KBM-7 (cell line): ENCODE measurements at regions of chr20 and their contacts with region 1.

Region 1: GRCh38 chr20:44080646-44081267 is 106.2 kb downstream of the JPH2 start:
- DNase-seq: peak; percentile 70

Region 2: GRCh38 chr20:43537921-43538877 is 542.6 kb before region 1 on chr20:
- in situ Hi-C with region 1: loop called (anchors 25 kb)
- DNase-seq: peak; percentile 37

Region 3: DNA sequence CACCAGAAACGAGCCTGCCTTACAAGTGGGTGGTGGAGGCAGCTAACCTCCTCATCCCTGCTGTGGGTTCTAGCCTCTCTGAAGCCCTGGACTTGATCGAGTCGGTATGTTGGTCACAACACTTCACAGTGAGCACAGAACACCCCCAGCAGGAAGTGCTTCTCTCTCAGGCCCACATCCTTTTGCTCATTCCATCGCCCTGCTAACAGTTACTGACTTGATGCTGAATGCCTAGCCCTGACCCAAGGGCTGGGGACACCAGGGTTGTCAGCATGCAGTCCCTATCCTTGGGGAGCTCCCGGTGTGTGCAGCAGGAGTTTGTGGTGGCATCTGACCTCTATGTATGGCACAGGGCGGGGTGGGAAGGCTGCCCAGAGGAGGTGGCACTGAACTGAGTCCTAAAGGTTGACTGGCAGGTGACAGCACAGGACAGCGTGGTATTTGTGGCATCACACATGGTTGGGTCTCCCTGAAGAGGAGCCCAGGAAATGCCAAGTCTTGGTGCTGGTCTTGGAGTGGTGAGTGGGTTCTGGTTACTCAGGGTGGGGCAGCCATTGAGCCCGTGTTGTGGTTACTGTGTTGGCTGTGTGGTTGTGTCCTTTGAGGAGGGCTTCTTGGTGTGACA is 380.7 kb before region 1 on chr20:
- in situ Hi-C with region 1: no loop called
- DNase-seq: no peak

Region 4: DNA sequence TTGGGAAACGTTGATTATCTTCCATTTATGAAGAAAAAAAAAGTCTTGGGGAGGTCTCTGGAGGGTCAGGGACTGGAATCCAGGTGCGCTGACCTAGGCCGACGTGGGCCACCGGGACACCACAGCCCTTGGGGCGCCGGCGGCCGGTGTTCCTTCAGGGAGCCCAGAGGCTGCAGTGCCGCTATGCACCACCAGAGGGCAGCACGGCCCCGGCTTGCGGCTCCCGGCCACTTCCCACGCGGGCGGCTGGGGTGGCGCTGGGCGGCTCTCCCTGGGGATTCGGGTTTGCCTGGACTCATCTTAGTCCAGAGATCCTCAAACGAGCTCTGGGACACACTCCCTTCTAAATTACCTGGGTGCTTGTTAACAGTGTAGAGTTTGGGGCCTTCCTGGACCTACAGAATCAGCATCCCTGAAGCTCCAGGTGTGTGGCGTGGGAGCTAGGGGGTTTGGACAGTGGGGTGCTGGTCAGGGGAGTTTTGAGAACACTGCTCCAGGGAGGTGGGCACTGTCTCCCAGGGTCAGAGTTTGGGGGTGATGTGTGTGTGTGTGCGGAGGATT is 330.9 kb before region 1 on chr20:
- in situ Hi-C with region 1: loop called (anchors 10 kb)
- DNase-seq: peak; percentile 61